GM12878 (cell line): ENCODE measurements at regions of chr9 and their contacts with region 1.

Region 1: DNA sequence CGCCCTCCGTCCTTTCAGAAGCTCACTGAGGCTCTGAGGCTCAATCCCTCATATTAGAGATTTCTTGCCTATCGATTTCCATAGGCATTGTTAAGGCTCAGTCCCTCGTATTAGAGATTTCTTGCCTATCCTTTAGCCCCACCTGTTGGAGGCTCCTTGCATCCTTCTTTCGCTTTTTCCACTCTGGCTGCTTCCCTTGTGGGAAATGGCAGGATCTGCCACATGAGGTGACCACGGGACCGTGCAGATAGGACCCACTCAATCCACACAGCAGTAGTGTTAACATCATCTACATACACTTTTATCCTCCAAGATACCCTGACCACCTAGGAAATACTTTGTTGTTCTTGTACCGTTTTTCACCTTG is 19.5 kb downstream of the IFT74 start:
- DNase-seq: no peak
- ATAC-seq: no peak; the same call in 2 of the 3 replicates
- H3K4me3 ChIP-seq: no peak overlapping the region
- H3K27ac ChIP-seq: no peak overlapping the region
- H3K4me1 ChIP-seq: no peaks in the 10 kb centered on the region
- H3K27me3 ChIP-seq: no peaks in the 10 kb centered on the region
- CTCF ChIP-seq: peak in 2 of 3 experiments; percentile 31 to 33; a peak in 2 of 6 replicates
- EP300 ChIP-seq: no peak
- POLR2A ChIP-seq: no peak
- RAD21 ChIP-seq: peak; percentile 41

Region 2: DNA sequence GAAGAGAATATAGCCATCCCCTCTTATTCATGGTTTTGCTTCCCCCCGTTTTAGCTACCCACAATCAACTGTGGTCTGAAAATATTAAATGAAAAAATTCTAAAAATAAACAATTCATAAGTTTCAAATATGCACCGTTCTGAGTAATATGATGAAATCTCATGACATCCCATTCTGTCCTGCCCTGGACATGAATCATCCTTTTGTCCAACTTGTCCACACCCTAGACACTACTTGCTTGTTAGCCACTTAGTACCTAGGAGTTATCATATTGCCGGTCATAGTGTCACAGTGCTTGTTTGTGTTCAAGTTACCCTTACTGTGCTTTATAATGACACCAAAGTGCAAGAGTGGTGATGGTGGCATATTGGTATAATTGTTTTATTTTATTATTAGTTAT is 196.6 kb before region 1 on chr9:
- CTCF ChIA-PET with region 1: no interaction called
- POLR2A ChIA-PET with region 1: no interaction called
- RAD21 ChIA-PET with region 1: no interaction called
- SMC1A ChIA-PET with region 1: no interaction called
- in situ Hi-C with region 1: no loop called
- intact Hi-C with region 1: no loop called
- DNase-seq: no peak
- ATAC-seq: no peak
- H3K4me3 ChIP-seq: no peak overlapping the region
- H3K27ac ChIP-seq: no peak overlapping the region
- H3K4me1 ChIP-seq: no peaks in the 10 kb centered on the region
- H3K27me3 ChIP-seq: no peaks in the 10 kb centered on the region
- CTCF ChIP-seq: no peak
- EP300 ChIP-seq: no peak
- POLR2A ChIP-seq: no peak
- RAD21 ChIP-seq: no peak

Region 3: DNA sequence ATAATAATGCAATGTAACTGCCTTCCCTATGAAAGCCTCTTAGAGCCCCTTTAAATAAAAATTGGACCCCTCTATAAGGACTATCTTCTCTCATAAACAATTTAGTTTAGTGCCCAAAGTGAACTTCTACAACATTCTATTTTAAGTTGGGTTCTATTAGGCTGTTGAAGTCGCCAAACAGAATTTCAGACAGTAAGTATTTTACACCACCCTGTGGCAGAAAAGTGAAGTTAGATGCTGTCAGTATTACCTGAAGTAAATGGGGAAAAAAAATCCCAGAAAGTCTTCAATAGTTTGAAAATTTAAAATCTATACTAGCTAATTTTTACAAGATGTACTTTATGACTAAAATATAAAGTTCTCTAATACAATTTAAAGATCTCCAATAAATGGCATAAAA is 112.6 kb before region 1 on chr9:
- CTCF ChIA-PET with region 1: no interaction called
- POLR2A ChIA-PET with region 1: no interaction called
- RAD21 ChIA-PET with region 1: no interaction called
- SMC1A ChIA-PET with region 1: no interaction called
- in situ Hi-C with region 1: no loop called
- intact Hi-C with region 1: loop called (anchors 10 kb)
- DNase-seq: no peak
- ATAC-seq: peak; percentile 51; the same call in 2 of the 3 replicates
- H3K4me3 ChIP-seq: no peak overlapping the region
- H3K27ac ChIP-seq: no peak overlapping the region
- H3K4me1 ChIP-seq: no peaks in the 10 kb centered on the region
- H3K27me3 ChIP-seq: no peaks in the 10 kb centered on the region
- CTCF ChIP-seq: peak; percentile 10 to 25 (median 19); a peak in 2 of 6 replicates
- EP300 ChIP-seq: no peak
- POLR2A ChIP-seq: no peak
- RAD21 ChIP-seq: peak; percentile 40